Motor neuron (in vitro differentiated cells): ENCODE measurements at regions of chr1 and their contacts with region 1.

Region 1: GRCh38 chr1:244319283-244320132 is 132.2 kb downstream of the ADSS2 start:
- ATAC-seq: no peak
- H3K4me3 ChIP-seq: no peak overlapping the region
- H3K27ac ChIP-seq: no peak overlapping the region
- H3K4me1 ChIP-seq: no peaks in the 10 kb centered on the region

Region 2: DNA sequence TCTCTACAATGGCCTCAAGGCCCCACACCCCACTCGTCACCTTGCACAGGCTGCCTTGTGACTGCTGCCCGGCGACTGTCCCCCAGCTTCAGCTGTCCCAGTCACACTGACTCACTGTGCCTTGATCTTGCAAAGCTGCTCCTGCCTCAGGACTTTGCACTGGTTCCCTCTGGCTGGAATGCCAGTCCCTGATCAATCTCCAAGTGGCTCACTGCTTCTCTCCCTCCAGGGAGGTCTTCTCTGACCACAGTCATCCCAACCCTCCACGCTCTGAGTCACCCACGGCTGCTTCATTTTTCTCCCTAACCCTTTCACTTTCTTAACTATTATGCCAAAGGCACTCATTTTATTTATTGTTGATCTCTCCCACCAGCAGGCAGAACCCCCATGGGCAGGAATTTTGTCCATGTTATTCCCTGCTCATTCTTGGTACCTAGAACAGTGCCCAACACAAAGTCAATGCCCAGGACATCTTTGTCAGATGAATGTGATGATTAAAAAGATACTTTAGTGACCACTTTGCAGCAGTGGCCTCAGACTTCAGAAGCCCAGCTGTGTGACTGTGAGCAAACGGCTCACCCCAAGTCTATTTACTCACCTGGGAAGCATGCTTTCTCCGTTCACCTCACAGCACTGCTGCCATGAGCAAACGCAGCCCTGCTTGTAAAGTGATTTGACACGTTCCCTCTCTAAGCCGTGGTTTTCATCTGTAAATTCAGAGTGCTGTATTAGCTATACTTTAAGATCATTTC is 215.0 kb before region 1 on chr1:
- in situ Hi-C with region 1: no loop called
- ATAC-seq: peak in 7 of 8 experiments; percentile 13 to 92 (median 46)
- H3K4me3 ChIP-seq: no peak overlapping the region
- H3K27ac ChIP-seq: no peak overlapping the region
- H3K4me1 ChIP-seq: peaks cover 37 to 51% of the 10 kb centered on the region in 2 donors

Region 3: DNA sequence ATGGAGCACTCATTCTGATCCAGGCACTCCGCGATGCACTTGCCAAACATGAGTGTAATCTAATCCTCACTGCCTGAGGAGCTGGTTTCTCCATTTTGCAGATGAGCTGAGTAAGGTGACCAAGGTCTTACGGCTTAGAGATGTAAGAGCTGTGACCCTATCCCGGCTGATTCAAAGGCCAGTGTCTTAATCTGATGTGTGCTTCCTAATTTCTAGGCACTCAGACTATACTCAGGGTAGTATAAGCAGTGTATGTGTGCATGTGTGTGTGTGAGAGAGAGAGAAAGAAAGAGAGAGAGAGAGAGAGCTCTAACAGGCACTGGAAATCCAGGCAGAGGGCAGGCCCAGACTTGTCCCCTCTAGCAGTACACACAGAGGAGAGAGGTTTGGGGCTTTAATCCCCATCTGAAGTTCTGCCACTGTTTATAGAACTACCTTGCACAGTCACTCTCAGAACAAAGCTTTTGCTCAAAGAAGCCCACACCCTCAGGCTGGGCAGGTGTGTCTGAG is 80.2 kb before region 1 on chr1:
- in situ Hi-C with region 1: no loop called
- ATAC-seq: peak in 4 of 8 experiments; percentile 23 to 74 (median 59)
- H3K4me3 ChIP-seq: no peak overlapping the region
- H3K27ac ChIP-seq: no peak overlapping the region
- H3K4me1 ChIP-seq: no peaks in the 10 kb centered on the region

Region 4: DNA sequence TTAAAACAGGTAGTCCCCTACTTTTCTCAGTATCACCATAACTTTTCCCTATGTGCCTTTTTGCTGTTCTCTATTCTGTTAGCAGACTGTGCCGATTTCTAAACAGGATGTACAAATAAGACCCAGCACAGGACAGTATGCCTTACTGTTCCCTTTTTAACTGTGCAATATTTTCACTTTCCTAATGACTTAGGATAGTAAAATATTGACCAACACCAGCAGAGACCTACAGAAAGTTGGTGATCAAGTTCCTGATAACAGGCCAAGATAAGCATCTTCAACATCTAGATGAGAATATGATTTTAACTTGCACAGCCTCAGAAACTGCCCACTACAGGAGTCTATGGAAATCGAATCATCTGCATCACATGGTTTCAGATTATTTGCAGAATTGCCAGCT is 90.2 kb after region 1 on chr1:
- in situ Hi-C with region 1: loop called in 1 of 9 experiments (anchors 25 kb)
- ATAC-seq: no peak
- H3K4me3 ChIP-seq: no peak overlapping the region
- H3K27ac ChIP-seq: no peak overlapping the region
- H3K4me1 ChIP-seq: no peaks in the 10 kb centered on the region